Endothelial cell of umbilical vein (primary cell): ENCODE measurements at regions of chr11 and their contacts with region 1.

Region 1: GRCh38 chr11:73141848-73142286 is 251 bp downstream of the FCHSD2 start:
- DNase-seq: peak; percentile 79
- H3K4me3 ChIP-seq: peak overlapping the region; percentile 56 to 95 (median 90)
- H3K27ac ChIP-seq: peak overlapping the region; percentile 88
- H3K4me1 ChIP-seq: peaks cover 37% of the 10 kb centered on the region
- H3K27me3 ChIP-seq: no peaks in the 10 kb centered on the region
- CTCF ChIP-seq: no peak
- POLR2A ChIP-seq: no peak

Region 2: GRCh38 chr11:72814286-72815109 is 327.4 kb before region 1 on chr11 and contains the start of gene ATG16L2:
- CTCF ChIA-PET with region 1: interaction called, 3 read pairs
- POLR2A ChIA-PET with region 1: no interaction called
- dilution Hi-C with region 1: no loop called
- intact Hi-C with region 1: loop called (anchors 1 kb)
- DNase-seq: peak; percentile 91
- H3K4me3 ChIP-seq: peak within 1 kb of the TSS; percentile 17 to 88 (median 56)
- H3K27ac ChIP-seq: peak within 1 kb of the TSS; percentile 67
- H3K4me1 ChIP-seq: peaks cover 31% of the 10 kb centered on the region
- H3K27me3 ChIP-seq: no peaks in the 10 kb centered on the region
- CTCF ChIP-seq: no peak
- POLR2A ChIP-seq: peak; percentile 68
- total RNA-seq, gene ATG16L2: 24.7 and 26.5 TPM in 2 replicates

Region 3: DNA sequence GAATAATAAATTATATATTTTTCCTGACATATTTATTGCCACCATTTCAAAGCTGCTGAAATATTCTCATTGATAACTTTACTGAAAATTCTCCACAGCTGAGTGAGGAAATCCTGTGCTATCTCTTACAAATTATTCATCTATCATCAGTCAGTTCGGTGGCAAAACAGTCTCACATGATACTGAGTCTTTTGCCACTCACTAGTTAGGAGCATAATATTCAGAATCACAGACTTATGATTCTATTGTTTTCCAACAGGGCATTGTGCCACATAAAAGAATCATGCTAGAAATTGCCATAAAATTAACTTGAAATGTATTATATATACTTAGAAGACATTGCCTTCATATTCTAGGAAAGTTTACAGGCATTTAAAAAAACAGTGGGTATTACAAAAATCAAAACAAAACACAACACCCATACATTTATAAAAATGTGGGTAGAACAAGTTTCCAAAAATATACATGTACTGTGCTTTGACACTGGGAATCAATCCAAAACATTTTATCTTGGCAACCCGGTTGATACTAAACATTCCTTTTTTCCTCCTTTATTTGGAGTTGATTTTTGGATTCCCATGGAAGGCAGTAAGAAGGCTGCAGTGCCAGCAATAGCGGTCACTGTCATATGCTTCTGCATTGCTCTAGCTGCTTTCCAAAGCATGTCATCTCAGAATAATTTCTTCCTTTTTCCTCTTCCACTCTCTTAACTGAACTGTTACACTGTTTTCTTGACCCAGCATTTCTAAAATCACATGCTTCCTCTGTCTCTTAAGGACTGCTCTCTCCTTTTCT is 285.1 kb before region 1 on chr11:
- CTCF ChIA-PET with region 1: no interaction called
- POLR2A ChIA-PET with region 1: no interaction called
- dilution Hi-C with region 1: no loop called
- intact Hi-C with region 1: loop called (anchors 5 kb)
- DNase-seq: peak; percentile 93
- H3K4me3 ChIP-seq: no peak overlapping the region
- H3K27ac ChIP-seq: peak overlapping the region; percentile 30
- H3K4me1 ChIP-seq: peaks cover 19% of the 10 kb centered on the region
- H3K27me3 ChIP-seq: no peaks in the 10 kb centered on the region
- CTCF ChIP-seq: peak in 1 of 2 donors; percentile 17
- POLR2A ChIP-seq: no peak

Region 4: DNA sequence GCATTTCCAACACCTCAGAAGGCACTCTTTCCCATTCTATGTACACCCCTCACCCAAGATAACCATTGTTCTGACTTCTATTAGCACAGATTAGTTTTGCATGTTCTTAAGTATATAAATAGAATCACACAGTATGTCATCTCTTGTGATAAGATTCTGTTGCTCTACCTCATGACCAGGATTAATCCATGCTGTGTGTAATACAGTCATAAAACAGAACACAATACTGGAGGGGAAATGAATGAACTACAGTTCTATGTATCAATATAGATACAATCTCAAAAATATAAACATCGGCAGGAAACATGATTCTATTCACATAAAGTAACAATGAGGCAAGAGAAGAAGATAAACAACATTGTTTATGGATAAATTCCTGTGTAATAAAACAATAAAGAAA is 176.2 kb before region 1 on chr11:
- CTCF ChIA-PET with region 1: interaction called, 3 read pairs
- POLR2A ChIA-PET with region 1: no interaction called
- dilution Hi-C with region 1: no loop called
- intact Hi-C with region 1: loop called (anchors 2 kb)
- DNase-seq: peak; percentile 94
- H3K4me3 ChIP-seq: no peak overlapping the region
- H3K27ac ChIP-seq: peak overlapping the region; percentile 81
- H3K4me1 ChIP-seq: peaks cover 18% of the 10 kb centered on the region
- H3K27me3 ChIP-seq: no peaks in the 10 kb centered on the region
- CTCF ChIP-seq: no peak
- POLR2A ChIP-seq: no peak

Region 5: DNA sequence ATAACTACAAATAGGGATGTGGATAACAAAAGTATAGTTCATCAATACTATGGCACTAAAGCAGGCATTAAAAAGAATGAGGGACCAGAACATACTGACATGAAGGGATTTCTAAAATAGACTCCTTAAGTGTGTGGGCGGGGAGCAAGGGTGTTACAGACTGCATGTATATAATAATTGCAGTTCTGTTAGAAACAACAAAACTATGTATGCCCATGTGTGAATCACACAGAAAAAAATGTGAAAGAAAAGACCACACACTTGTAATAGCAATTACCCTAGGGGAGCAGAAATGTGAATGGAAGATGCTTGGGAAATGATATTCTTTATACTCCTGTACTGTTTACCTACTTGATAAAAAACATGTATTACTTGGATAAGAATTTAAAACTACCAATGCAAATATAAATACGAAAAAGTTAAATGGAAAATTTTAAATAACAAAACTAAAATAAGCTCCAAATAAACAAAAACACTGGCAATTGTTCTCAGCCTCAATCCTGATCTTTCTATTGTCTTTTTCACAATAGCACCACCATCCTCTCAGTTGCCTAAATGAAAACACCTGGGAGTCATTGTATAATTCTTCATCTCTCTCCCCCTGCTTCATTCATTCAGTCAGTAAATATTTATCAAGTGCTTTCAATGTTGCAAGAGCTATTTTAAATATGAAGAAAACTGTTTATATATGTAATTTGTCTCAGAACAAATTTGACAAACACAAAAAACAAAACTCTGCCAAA is 129.6 kb before region 1 on chr11:
- CTCF ChIA-PET with region 1: no interaction called
- POLR2A ChIA-PET with region 1: no interaction called
- dilution Hi-C with region 1: no loop called
- intact Hi-C with region 1: no loop called
- DNase-seq: peak; percentile 11
- H3K4me3 ChIP-seq: no peak overlapping the region
- H3K27ac ChIP-seq: no peak overlapping the region
- H3K4me1 ChIP-seq: peaks cover 3% of the 10 kb centered on the region
- H3K27me3 ChIP-seq: no peaks in the 10 kb centered on the region
- CTCF ChIP-seq: no peak
- POLR2A ChIP-seq: no peak

Region 6: GRCh38 chr11:73201249-73201648 is 59.4 kb after region 1 on chr11:
- CTCF ChIA-PET with region 1: no interaction called
- POLR2A ChIA-PET with region 1: no interaction called
- dilution Hi-C with region 1: no loop called
- intact Hi-C with region 1: no loop called
- DNase-seq: no peak
- H3K4me3 ChIP-seq: no peak overlapping the region
- H3K27ac ChIP-seq: no peak overlapping the region
- H3K4me1 ChIP-seq: peaks cover 13% of the 10 kb centered on the region
- H3K27me3 ChIP-seq: no peaks in the 10 kb centered on the region
- CTCF ChIP-seq: no peak
- POLR2A ChIP-seq: no peak

Region 7: GRCh38 chr11:73242251-73243079 is 100.6 kb after region 1 on chr11:
- CTCF ChIA-PET with region 1: interaction called, 7 read pairs
- POLR2A ChIA-PET with region 1: no interaction called
- dilution Hi-C with region 1: no loop called
- intact Hi-C with region 1: loop called (anchors 2 kb)
- DNase-seq: peak; percentile 84
- H3K4me3 ChIP-seq: no peak overlapping the region
- H3K27ac ChIP-seq: no peak overlapping the region
- H3K4me1 ChIP-seq: peaks cover 11% of the 10 kb centered on the region
- H3K27me3 ChIP-seq: no peaks in the 10 kb centered on the region
- CTCF ChIP-seq: peak; percentile 88 to 89
- POLR2A ChIP-seq: no peak

Region 8: GRCh38 chr11:73376160-73376802 is 234.4 kb after region 1 on chr11 and contains the start of gene RELT:
- CTCF ChIA-PET with region 1: no interaction called
- POLR2A ChIA-PET with region 1: no interaction called
- dilution Hi-C with region 1: no loop called
- intact Hi-C with region 1: no loop called
- DNase-seq: peak; percentile 93
- H3K4me3 ChIP-seq: peak within 1 kb of the TSS; percentile 47 to 80 (median 49)
- H3K27ac ChIP-seq: peak within 1 kb of the TSS; percentile 75
- H3K4me1 ChIP-seq: peaks cover 2% of the 10 kb centered on the region
- H3K27me3 ChIP-seq: no peaks in the 10 kb centered on the region
- CTCF ChIP-seq: peak; percentile 87 to 95
- POLR2A ChIP-seq: peak; percentile 99
- total RNA-seq, gene RELT: 12.6 and 13.1 TPM in 2 replicates

Region 9: DNA sequence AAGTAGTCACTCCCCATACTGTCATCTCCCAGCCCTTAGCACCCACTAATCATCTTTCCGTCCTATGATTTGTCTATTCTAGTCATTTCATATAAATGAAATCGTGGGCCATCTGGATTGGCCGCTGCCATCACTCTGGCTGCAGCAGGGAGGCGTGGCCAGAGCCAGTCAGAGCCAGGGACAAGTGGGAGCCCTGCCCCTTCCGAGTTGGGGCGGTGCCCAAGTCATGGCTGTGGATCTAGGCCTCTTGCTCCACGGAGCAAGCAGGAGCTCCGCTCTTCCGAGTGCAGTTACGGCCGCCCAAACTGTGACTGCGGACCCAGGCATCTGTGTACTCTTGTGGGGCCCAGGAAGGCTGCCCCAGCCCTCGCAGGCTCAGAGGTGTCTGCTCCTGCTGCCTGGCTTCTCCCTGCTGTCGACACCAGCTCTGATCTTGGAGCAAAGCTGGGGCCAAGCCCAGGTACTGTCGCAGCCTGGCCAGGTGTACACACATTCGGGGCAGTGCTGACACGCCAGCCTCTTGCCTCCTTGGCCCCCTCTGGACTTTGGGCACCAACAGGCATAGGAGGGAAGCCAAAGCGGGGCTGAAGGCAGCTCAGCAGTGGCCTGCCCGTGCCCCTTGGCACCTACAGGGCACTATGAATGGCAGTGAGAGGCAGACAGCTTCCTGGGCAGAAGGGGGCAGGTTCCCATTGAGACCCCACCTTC is 654.2 kb after region 1 on chr11:
- CTCF ChIA-PET with region 1: no interaction called
- POLR2A ChIA-PET with region 1: no interaction called
- dilution Hi-C with region 1: no loop called
- intact Hi-C with region 1: no loop called
- DNase-seq: no peak
- H3K4me3 ChIP-seq: no peak overlapping the region
- H3K27ac ChIP-seq: no peak overlapping the region
- H3K4me1 ChIP-seq: no peaks in the 10 kb centered on the region
- H3K27me3 ChIP-seq: no peaks in the 10 kb centered on the region
- CTCF ChIP-seq: no peak
- POLR2A ChIP-seq: no peak